AG04450 (cell line): ENCODE measurements at regions of chr19 and their contacts with region 1.

Region 1: DNA sequence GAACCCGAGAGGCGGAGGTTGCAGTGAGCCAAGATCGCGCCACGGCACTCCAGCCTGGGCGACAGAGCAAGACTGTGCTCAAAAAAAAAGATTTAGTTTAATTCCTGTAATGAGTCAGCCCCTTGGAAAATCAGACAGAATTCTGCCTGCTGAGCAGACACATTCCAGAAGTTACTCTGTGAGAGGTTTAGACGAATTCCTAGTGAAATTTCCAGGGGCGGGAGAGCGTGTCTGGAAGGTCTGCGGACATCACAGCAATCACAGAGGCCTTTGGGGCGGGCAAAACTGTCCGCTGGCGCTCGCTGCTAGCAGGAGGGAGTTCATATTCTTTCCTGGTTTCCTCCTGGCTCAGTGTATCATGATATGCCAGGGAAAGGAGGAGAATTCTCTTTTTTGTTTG is 17.5 kb downstream of the MISP start:
- DNase-seq: peak; percentile 51
- H3K4me3 ChIP-seq: no peak overlapping the region
- H3K27ac ChIP-seq: peak overlapping the region; percentile 65
- H3K27me3 ChIP-seq: no peaks in the 10 kb centered on the region
- CTCF ChIP-seq: no peak

Region 2: GRCh38 chr19:728011-728410 is 40.4 kb before region 1 on chr19:
- CTCF ChIA-PET with region 1: no interaction called
- POLR2A ChIA-PET with region 1: no interaction called
- DNase-seq: no peak
- H3K4me3 ChIP-seq: no peak overlapping the region
- H3K27ac ChIP-seq: no peak overlapping the region
- H3K27me3 ChIP-seq: no peaks in the 10 kb centered on the region
- CTCF ChIP-seq: no peak

Region 3: GRCh38 chr19:752652-753517 is 15.5 kb before region 1 on chr19:
- CTCF ChIA-PET with region 1: interaction called, 11 read pairs
- POLR2A ChIA-PET with region 1: interaction called, 3 read pairs
- DNase-seq: peak; percentile 69
- H3K4me3 ChIP-seq: no peak overlapping the region
- H3K27ac ChIP-seq: peak overlapping the region; percentile 98
- H3K27me3 ChIP-seq: no peaks in the 10 kb centered on the region
- CTCF ChIP-seq: no peak

Region 4: DNA sequence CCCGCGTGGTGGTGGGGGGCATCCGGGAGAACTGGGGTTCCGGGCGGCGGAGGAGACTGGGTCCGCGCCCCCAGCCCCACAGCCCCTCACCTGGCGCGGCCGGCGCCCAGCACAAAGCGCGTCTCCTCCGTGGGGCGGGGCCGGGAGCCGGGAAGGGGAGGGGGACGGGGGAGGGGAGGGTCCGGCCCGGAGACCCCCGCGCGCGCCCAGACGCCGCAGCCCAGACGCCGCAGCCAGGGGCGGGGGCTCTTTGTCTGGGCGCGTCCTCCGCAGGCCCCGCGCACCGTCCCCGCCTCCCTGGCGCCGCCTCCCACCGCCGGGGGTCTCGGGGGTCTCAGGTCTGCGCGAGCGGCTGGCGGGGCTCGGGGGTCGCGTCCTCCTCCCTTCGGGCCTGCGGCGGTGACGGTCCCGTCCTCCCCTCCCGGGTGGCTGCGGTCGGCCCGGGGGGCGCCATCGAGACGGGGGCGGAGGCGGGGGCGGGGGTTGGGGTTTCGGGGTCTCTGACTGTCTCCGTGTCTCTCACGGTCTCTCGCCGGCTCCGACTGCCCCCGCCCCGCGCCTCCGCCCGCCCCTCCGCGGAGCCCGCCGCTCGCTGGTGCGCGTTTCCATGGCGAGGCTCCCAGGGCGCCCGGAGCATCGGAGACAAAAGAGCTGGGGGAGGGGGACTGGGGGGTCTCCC is 53.5 kb after region 1 on chr19 and contains the start of gene PLPPR3:
- CTCF ChIA-PET with region 1: interaction called, 12 read pairs
- POLR2A ChIA-PET with region 1: no interaction called
- DNase-seq: no peak
- H3K4me3 ChIP-seq: peak within 1 kb of the TSS; percentile 48
- H3K27ac ChIP-seq: no peak within 1 kb of the TSS
- H3K27me3 ChIP-seq: no peaks in the 10 kb centered on the region
- CTCF ChIP-seq: no peak
- polyA plus RNA-seq, gene PLPPR3: 1.3 and 2.2 TPM in 2 replicates